ENCODE measurements at regions of chr17 and their contacts with region 1.

Region 1: DNA sequence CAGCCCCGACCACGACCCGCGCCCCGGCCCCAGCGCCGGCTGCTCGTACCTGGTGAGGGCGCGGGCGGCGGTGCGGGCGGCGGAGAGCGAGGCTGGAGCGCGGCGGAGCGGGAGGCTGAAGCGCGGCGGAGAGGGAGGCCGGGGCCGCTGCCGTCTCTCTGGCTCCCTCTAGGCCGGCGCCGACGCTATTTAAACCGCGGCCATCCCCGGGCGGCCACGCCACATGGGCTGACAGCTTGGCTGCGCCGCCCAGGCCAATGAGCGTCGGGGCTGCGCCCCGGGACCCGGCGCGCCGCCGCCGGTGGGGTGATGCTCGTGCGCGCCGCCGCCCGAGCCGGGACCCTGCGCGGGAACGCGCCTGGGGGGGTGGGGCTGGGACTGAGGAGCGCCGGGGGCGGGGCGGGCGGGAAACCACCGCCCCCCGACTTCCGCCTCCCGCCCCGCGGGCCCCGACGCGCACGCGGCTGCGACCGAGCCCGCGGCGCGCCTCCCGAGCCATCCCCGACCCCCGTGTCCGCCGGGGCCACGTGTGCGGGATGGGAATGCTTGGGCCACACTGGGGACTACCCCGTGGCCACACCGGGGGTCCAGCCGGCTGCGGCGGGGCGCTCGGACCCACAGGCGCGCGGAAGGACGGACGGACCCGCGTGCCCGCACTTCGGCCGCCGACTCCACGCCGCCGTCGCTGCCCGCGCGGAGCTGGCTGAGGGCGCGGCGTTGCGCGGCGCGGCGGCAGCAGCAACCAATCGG is at the start of gene FASN:
- DNase-seq: peak; percentile 95
- H3K4me3 ChIP-seq: peak within 1 kb of the TSS; percentile 59 to 94 (median 65)
- H3K27ac ChIP-seq: peak within 1 kb of the TSS; percentile 88 to 98 (median 94)
- H3K4me1 ChIP-seq: peaks cover 0 to 49% (median 38%) of the 10 kb centered on the region in 4 donors
- H3K27me3 ChIP-seq: no peaks in the 10 kb centered on the region
- CTCF ChIP-seq: peak in 1 of 4 experiments; percentile 31
- EP300 ChIP-seq: no peak
- POLR2A ChIP-seq: peak; percentile 28 to 38
- total RNA-seq, gene FASN: 12.7 to 44.2 (median 19.0) TPM

Region 2: GRCh38 chr17:81666342-81667191 is 431.7 kb before region 1 on chr17 and contains the starts of genes CCDC137 and OXLD1:
- intact Hi-C with region 1: no loop called
- DNase-seq: peak; percentile 98
- H3K4me3 ChIP-seq: peak within 1 kb of the TSS; percentile 70 to 95 (median 84)
- H3K27ac ChIP-seq: peak within 1 kb of the TSS; percentile 83 to 96 (median 91)
- H3K4me1 ChIP-seq: peaks cover 0 to 27% (median 26%) of the 10 kb centered on the region in 4 donors
- H3K27me3 ChIP-seq: no peaks in the 10 kb centered on the region
- CTCF ChIP-seq: no peak
- EP300 ChIP-seq: no peak
- POLR2A ChIP-seq: peak; percentile 65 to 85
- total RNA-seq, gene CCDC137: 5.5 to 10.7 (median 9.0) TPM
- total RNA-seq, gene OXLD1: 14.4 to 36.2 (median 26.8) TPM

Region 3: DNA sequence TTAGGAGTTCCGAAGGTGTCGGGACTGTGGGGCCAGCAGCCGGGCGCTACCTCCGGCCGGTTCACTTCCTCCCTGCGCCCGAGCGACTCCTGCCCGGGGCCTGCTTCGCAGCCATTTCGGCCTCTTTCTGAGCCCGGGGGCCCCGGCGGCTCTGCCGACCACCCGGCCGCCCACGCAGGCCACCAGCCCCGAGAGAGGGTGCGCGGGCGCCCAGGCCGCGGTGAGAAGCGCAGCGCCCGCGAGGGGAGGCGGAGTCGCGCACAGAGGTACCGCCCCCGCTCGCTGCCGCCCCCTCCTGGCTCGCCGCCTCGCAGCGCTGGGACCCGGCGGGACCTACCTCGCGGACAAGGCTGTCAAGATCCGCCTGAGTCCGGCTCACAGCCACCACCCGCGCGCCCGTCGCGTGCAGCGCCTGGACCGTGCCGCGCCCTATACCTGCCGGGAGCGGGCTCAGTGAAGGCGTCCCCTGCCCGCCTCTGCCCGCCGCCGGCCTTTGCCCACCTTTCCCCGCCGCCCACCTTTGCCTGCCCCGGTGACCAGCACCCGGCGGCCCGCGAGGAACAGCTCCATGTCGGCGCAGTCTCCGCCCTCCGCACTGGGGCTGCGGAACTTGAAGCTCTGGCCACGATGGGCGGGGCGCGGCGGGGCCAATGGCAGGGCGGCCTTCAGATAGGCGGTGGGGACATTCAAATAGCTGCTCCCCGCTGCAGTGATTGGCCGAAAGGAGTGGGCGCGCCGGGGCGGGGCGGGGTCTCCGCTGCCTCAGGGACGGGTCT is 60.9 kb before region 1 on chr17 and contains the start of gene DCXR:
- intact Hi-C with region 1: loop called (anchors 2 kb)
- DNase-seq: peak; percentile 99
- H3K4me3 ChIP-seq: peak within 1 kb of the TSS; percentile 58 to 77 (median 65)
- H3K27ac ChIP-seq: peak within 1 kb of the TSS; percentile 93 to 98 (median 98)
- H3K4me1 ChIP-seq: peaks cover 3 to 22% (median 17%) of the 10 kb centered on the region in 4 donors
- H3K27me3 ChIP-seq: peaks cover 2 to 16% (median 13%) of the 10 kb centered on the region in 3 donors
- CTCF ChIP-seq: peak in 3 of 4 experiments; percentile 36 to 78 (median 43)
- EP300 ChIP-seq: no peak
- POLR2A ChIP-seq: peak; percentile 71 to 93
- total RNA-seq, gene DCXR: 44.3 to 94.8 (median 86.3) TPM

Region 4: DNA sequence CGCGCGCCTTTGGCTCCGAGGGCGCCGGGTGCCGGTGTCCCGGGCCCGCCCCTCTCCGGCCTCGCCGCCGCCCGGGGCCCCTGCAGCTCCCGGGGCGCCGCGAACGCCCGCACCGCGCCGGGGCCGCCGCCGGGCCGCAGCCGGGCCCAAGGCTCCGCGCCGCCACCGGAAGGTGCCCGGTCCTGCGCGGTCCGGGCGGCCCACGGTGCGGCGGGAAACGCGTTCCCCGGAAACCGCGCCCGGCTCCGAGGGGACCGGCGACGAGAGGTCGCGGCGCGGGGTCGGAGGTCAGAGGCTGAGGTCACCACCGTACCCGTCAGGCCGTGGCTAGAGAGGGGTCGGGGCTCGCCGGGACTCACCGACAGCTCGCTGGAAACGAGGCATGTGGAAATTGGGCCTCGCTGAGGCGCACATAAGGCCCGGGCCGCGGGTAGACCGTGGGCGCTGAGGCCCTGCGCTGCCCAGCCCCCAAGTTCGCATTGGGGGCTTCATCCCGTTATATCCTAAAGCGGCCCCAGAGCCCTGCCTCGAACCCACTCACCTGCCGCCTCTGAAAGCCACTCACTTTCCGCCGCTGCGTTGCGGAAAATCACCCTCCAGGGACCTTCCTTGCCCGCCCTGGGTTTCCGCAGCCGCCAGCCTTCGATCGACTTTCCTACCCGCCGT is 32.5 kb before region 1 on chr17 and contains the start of gene DUS1L:
- intact Hi-C with region 1: loop called (anchors 2 kb)
- DNase-seq: peak; percentile 80
- H3K4me3 ChIP-seq: peak within 1 kb of the TSS; percentile 61 to 97 (median 88)
- H3K27ac ChIP-seq: peak within 1 kb of the TSS; percentile 83 to 89 (median 86)
- H3K4me1 ChIP-seq: peaks cover 0 to 30% (median 25%) of the 10 kb centered on the region in 4 donors
- H3K27me3 ChIP-seq: no peaks in the 10 kb centered on the region
- CTCF ChIP-seq: no peak
- EP300 ChIP-seq: no peak
- POLR2A ChIP-seq: no peak
- total RNA-seq, gene DUS1L: 31.3 to 71.0 (median 54.2) TPM

Measured in sigmoid colon (tissue), 7 donors.